Activated CD4-positive, alpha-beta T cell treated with anti-CD3 and anti-CD28 coated beads, Interleukin-2, amount 10 ng/mL, durations not matched to agents 24 days and 14 days (primary cell): ENCODE measurements at regions of chr18 and their contacts with region 1.

Region 1: DNA sequence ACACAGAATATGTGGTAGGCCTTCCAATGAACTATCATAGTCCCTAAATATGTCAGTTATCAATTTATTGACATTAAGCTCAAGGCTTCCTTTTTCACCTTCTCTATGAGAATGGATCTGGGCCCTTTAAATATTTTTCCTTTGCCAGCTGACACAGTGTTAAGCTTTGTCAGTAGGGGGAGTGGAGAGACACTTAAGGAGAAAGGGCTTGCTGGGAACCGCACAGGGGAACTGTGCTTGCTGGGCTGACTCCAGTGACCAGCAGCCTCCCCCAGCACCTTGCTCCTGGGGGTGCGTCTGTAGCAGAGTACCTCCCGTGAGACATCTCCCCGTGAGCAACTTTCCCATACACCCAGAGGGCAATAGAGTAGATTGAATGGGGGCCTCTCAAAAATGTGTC is 6.5 kb upstream of the PTPN2 start:
- DNase-seq: no peak
- H3K4me3 Mint-ChIP-seq: no peak overlapping the region
- H3K27ac Mint-ChIP-seq: no peak overlapping the region
- H3K4me1 Mint-ChIP-seq: peaks cover 16% of the 10 kb centered on the region
- H3K27me3 Mint-ChIP-seq: peaks cover 5% of the 10 kb centered on the region

Region 2: DNA sequence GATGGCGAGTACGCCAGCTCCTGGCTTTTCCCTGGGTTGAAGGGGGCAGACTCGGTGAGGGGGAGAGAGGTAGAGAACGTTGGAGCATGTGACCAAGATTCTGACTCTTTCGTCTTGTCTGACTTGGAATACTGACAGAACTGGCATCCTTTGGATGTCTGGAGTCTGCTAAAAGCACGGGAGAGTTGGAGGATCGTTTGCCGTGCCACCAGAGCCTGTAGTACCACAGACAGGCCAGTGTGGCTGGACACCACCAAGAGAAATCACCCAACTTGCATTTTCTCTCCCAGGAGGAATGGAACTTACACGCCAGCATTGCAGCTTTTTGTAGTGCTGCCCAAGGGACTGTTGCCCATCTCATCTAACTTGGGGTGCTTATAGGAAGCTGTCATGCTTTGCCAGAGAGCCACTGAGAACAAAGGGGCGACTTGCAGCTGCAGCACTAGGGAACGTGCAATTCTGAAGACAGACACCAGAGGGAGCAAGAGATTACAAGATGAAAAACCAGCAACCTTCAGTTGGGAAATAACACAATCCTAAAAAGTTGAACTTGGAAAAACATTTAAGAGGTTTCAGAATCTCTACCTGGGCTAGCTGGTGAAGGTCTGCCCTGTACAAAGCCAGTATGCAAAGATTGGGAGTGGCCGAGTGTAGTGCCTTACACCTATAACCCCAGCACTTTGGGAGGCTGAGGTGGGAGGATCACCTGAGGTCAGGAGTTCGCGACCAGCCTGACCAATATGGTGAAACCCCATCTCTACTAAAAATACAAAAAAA is 163.5 kb before region 1 on chr18:
- intact Hi-C with region 1: loop called (anchors 1 kb)
- DNase-seq: peak; percentile 90
- H3K4me3 Mint-ChIP-seq: no peak overlapping the region
- H3K27ac Mint-ChIP-seq: no peak overlapping the region
- H3K4me1 Mint-ChIP-seq: peaks cover 3% of the 10 kb centered on the region
- H3K27me3 Mint-ChIP-seq: no peaks in the 10 kb centered on the region

Region 3: GRCh38 chr18:12744103-12744502 is 146.4 kb before region 1 on chr18:
- intact Hi-C with region 1: loop called (anchors 1 kb)
- DNase-seq: no peak
- H3K4me3 Mint-ChIP-seq: no peak overlapping the region
- H3K27ac Mint-ChIP-seq: no peak overlapping the region
- H3K4me1 Mint-ChIP-seq: peaks cover 4% of the 10 kb centered on the region
- H3K27me3 Mint-ChIP-seq: no peaks in the 10 kb centered on the region

Region 4: DNA sequence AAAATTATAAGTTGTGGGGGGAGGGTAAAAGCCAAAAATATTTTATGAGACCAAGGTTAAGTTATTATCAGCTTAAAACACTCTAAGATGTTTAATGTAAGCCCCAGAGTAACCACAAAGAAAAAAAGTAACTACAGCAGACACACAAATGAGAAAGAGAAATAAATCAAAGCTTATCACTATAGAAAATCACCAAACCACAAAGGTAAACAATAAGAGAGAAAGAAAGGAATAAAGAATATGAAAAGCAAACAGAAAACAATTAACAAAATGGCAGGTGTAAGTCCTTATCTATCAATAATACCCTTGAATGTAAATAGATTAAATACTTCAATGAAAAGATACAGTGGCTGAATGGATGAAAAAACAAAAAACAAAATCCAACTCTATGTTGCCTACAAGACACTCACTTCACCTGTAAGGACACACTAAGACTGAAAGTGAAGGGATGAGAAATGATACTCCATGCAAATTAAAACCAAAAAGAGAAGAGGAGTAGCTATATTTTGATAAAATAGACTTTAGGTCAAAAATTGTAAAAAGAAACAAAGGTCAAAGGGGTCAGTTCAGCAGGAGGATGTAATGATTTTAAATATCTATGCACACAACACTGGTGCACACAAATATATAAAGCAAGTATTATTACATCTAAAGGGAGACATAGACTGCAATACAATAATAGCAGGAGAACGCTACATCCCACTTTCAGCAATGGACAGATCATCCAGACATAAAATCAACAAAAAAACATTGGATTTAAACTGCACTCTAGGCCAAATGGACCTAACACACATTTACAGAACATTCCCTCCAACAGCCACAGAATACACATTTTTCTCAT is 87.2 kb before region 1 on chr18:
- intact Hi-C with region 1: no loop called
- DNase-seq: no peak
- H3K4me3 Mint-ChIP-seq: no peak overlapping the region
- H3K27ac Mint-ChIP-seq: no peak overlapping the region
- H3K4me1 Mint-ChIP-seq: peaks cover 13% of the 10 kb centered on the region
- H3K27me3 Mint-ChIP-seq: no peaks in the 10 kb centered on the region